Adrenal gland (tissue), 19 donors: ENCODE measurements at regions of chr19 and their contacts with region 1.

Region 1: GRCh38 chr19:13277104-13277809 is 127.0 kb downstream of the IER2 start:
- DNase-seq: peak; percentile 22 to 74 (median 60)
- H3K4me3 ChIP-seq: no peak overlapping the region
- H3K27ac ChIP-seq: no peak overlapping the region
- H3K4me1 ChIP-seq: no peaks in the 10 kb centered on the region
- H3K27me3 ChIP-seq: no peaks in the 10 kb centered on the region
- CTCF ChIP-seq: peak; percentile 56 to 90 (median 72)
- POLR2A ChIP-seq: no peak

Region 2: GRCh38 chr19:12965017-12965811 is 312.0 kb before region 1 on chr19:
- intact Hi-C with region 1: loop called in 1 of 2 experiments (anchors 10 kb)
- DNase-seq: peak; percentile 74 to 88 (median 80)
- H3K4me3 ChIP-seq: peak overlapping the region in 2 of 4 donors; percentile 34 to 69
- H3K27ac ChIP-seq: peak overlapping the region in 1 of 5 donors; percentile 47
- H3K4me1 ChIP-seq: peaks cover 0 to 8% of the 10 kb centered on the region in 2 donors
- H3K27me3 ChIP-seq: no peaks in the 10 kb centered on the region
- CTCF ChIP-seq: peak; percentile 91 to 97 (median 95)
- POLR2A ChIP-seq: no peak

Region 3: DNA sequence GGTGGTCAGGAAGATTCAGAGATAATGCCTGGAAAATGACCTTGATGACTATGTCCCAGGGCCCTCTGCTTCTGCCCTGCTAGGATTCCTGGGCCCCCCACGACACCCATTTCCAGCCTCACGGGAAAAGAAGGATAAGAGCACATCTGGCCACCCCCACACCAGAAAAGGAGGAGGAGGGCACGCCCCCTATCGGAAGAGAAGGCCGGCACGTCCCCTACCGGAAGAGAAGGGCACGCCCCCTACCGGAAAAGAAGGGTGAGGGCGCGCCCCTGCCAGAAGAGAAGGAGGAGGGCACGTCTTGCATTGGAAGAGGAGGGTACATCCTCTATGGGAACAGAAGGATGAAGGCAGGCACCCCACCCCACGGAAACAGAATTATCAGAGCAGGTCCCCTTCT is 42.7 kb before region 1 on chr19:
- intact Hi-C with region 1: no loop called
- DNase-seq: peak in 4 of 7 donors; percentile 36 to 59 (median 42)
- H3K4me3 ChIP-seq: no peak overlapping the region
- H3K27ac ChIP-seq: no peak overlapping the region
- H3K4me1 ChIP-seq: no peaks in the 10 kb centered on the region
- H3K27me3 ChIP-seq: no peaks in the 10 kb centered on the region
- CTCF ChIP-seq: peak in 4 of 6 experiments; percentile 5 to 60 (median 48)
- POLR2A ChIP-seq: no peak

Region 4: GRCh38 chr19:13381827-13382632 is 104.8 kb after region 1 on chr19:
- intact Hi-C with region 1: no loop called
- DNase-seq: no peak
- H3K4me3 ChIP-seq: no peak overlapping the region
- H3K27ac ChIP-seq: no peak overlapping the region
- H3K4me1 ChIP-seq: no peaks in the 10 kb centered on the region
- H3K27me3 ChIP-seq: no peaks in the 10 kb centered on the region
- CTCF ChIP-seq: no peak
- POLR2A ChIP-seq: no peak

Region 5: DNA sequence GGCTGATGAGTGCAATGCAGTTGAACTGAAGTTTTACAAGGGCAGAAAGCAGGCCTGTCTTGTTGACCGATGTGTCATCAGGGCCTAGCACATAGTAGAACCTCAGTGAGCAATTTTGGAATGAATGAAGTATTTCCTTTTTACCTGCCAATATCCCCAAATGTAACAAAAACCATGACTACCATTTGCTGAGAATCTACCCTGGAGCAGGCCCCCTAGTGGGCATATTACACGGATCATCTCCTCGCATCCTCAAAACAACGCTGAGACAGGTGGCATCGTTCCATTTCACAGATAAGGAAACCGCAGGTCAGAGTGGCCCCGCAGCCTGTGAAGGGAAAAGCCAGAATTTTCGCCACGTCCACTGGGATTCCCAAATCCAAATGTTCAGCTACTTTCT is 151.1 kb after region 1 on chr19:
- intact Hi-C with region 1: loop called in 1 of 2 experiments (anchors 5 kb)
- DNase-seq: peak in 1 of 7 donors; percentile 4
- H3K4me3 ChIP-seq: no peak overlapping the region
- H3K27ac ChIP-seq: no peak overlapping the region
- H3K4me1 ChIP-seq: no peaks in the 10 kb centered on the region
- H3K27me3 ChIP-seq: peaks cover 3% of the 10 kb centered on the region
- CTCF ChIP-seq: peak in 4 of 6 experiments; percentile 10 to 27 (median 16)
- POLR2A ChIP-seq: no peak

Region 6: GRCh38 chr19:13579388-13580060 is 302.3 kb after region 1 on chr19:
- intact Hi-C with region 1: loop called in 1 of 2 experiments (anchors 5 kb)
- DNase-seq: no peak
- H3K4me3 ChIP-seq: no peak overlapping the region
- H3K27ac ChIP-seq: no peak overlapping the region
- H3K4me1 ChIP-seq: no peaks in the 10 kb centered on the region
- H3K27me3 ChIP-seq: no peaks in the 10 kb centered on the region
- CTCF ChIP-seq: no peak
- POLR2A ChIP-seq: no peak

Region 7: DNA sequence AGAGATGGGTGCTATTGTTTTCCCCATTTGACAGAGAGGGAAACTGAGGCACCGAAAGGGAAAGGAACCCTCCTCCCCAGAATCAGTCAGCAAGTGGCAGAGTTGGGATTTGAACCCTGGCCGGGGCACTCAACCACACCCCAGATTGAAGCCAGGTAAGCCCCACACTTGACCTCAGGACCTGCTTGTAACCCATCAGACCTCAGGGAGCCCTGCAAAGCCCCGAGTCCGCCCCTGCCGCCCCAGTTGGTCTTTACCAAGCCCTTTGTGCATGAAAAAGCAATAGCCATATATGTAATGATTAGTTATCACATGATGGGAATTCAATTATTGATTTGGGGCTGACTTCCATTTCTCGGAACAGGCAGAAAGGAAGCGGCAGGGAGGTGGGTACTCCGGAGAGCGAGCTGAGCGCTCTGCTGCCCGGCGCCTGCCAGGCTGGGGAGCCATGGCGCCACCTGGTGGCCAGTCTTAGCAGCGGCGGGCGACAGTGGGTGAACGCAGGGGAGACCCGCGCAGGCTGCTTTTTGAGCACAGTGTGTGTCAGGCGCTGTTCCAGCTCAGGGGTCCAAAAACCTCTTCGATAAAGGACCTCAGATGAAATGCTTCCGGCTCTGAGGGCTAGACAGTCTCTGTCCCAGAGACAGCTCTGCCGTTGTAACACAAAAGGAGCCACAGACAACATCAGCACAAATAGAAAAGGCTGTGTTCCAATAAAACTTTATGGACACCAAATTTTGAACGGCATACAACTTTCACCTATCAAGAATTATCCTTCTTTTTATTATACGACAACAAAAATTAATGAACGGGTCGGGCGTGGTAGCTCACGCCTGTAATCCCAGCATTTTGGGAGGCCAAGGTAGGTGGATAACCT is 311.9 kb after region 1 on chr19:
- intact Hi-C with region 1: loop called (anchors 2 to 5 kb)
- DNase-seq: peak; percentile 51 to 79 (median 65)
- H3K4me3 ChIP-seq: no peak overlapping the region
- H3K27ac ChIP-seq: no peak overlapping the region
- H3K4me1 ChIP-seq: no peaks in the 10 kb centered on the region
- H3K27me3 ChIP-seq: peaks cover 8% of the 10 kb centered on the region
- CTCF ChIP-seq: peak; percentile 68 to 98 (median 88)
- POLR2A ChIP-seq: no peak

Region 8: GRCh38 chr19:13718733-13719132 is 441.5 kb after region 1 on chr19:
- intact Hi-C with region 1: loop called in 1 of 2 experiments (anchors 10 kb)
- DNase-seq: peak in 2 of 7 donors; percentile 14 to 75
- H3K4me3 ChIP-seq: no peak overlapping the region
- H3K27ac ChIP-seq: no peak overlapping the region
- H3K4me1 ChIP-seq: no peaks in the 10 kb centered on the region
- H3K27me3 ChIP-seq: no peaks in the 10 kb centered on the region
- CTCF ChIP-seq: peak in 3 of 6 experiments; percentile 12 to 32 (median 25)
- POLR2A ChIP-seq: no peak

Region 9: GRCh38 chr19:13861732-13862531 is 584.7 kb after region 1 on chr19:
- intact Hi-C with region 1: loop called (anchors 5 to 10 kb)
- DNase-seq: peak; percentile 89 to 97 (median 93)
- H3K4me3 ChIP-seq: peak overlapping the region in 3 of 4 donors; percentile 23 to 43 (median 28)
- H3K27ac ChIP-seq: peak overlapping the region; percentile 9 to 84 (median 77)
- H3K4me1 ChIP-seq: peaks cover 6 to 10% of the 10 kb centered on the region in 2 donors
- H3K27me3 ChIP-seq: peaks cover 5% of the 10 kb centered on the region
- CTCF ChIP-seq: peak; percentile 99 to 100 (median 100)
- POLR2A ChIP-seq: peak in 1 of 2 donors; percentile 40